ENCODE measurements at regions of chr4 and their contacts with region 1.

Region 1: GRCh38 chr4:148025981-148026380 is 294.1 kb downstream of the ARHGAP10 start:
- DNase-seq: no peak
- ATAC-seq: no peak
- H3K4me3 ChIP-seq: no peak overlapping the region
- H3K4me3 Mint-ChIP-seq: no peak overlapping the region
- H3K27ac ChIP-seq: no peak overlapping the region
- H3K27ac Mint-ChIP-seq: no peak overlapping the region
- H3K4me1 ChIP-seq: no peaks in the 10 kb centered on the region
- H3K4me1 Mint-ChIP-seq: no peaks in the 10 kb centered on the region
- H3K27me3 ChIP-seq: no peaks in the 10 kb centered on the region
- H3K27me3 Mint-ChIP-seq: no peaks in the 10 kb centered on the region
- CTCF ChIP-seq: no peak

Region 2: GRCh38 chr4:148776941-148777340 is 751.0 kb after region 1 on chr4:
- CTCF ChIA-PET with region 1: no interaction called
- POLR2A ChIA-PET with region 1: no interaction called
- intact Hi-C with region 1: loop called in 1 of 2 experiments (anchors 10 kb)
- DNase-seq: no peak
- ATAC-seq: no peak
- H3K4me3 ChIP-seq: no peak overlapping the region
- H3K4me3 Mint-ChIP-seq: no peak overlapping the region
- H3K27ac ChIP-seq: no peak overlapping the region
- H3K27ac Mint-ChIP-seq: no peak overlapping the region
- H3K4me1 ChIP-seq: no peaks in the 10 kb centered on the region
- H3K4me1 Mint-ChIP-seq: no peaks in the 10 kb centered on the region
- H3K27me3 ChIP-seq: no peaks in the 10 kb centered on the region
- H3K27me3 Mint-ChIP-seq: no peaks in the 10 kb centered on the region
- CTCF ChIP-seq: no peak

Region 3: GRCh38 chr4:149031399-149031798 is 1005.4 kb after region 1 on chr4:
- CTCF ChIA-PET with region 1: no interaction called
- POLR2A ChIA-PET with region 1: no interaction called
- intact Hi-C with region 1: loop called (anchors 2 to 10 kb)
- DNase-seq: no peak
- ATAC-seq: no peak
- H3K4me3 ChIP-seq: no peak overlapping the region
- H3K4me3 Mint-ChIP-seq: no peak overlapping the region
- H3K27ac ChIP-seq: no peak overlapping the region
- H3K27ac Mint-ChIP-seq: no peak overlapping the region
- H3K4me1 ChIP-seq: no peaks in the 10 kb centered on the region
- H3K4me1 Mint-ChIP-seq: no peaks in the 10 kb centered on the region
- H3K27me3 ChIP-seq: peaks cover 0 to under 1% of the 10 kb centered on the region in 2 experiments
- H3K27me3 Mint-ChIP-seq: no peaks in the 10 kb centered on the region
- CTCF ChIP-seq: no peak

Region 4: DNA sequence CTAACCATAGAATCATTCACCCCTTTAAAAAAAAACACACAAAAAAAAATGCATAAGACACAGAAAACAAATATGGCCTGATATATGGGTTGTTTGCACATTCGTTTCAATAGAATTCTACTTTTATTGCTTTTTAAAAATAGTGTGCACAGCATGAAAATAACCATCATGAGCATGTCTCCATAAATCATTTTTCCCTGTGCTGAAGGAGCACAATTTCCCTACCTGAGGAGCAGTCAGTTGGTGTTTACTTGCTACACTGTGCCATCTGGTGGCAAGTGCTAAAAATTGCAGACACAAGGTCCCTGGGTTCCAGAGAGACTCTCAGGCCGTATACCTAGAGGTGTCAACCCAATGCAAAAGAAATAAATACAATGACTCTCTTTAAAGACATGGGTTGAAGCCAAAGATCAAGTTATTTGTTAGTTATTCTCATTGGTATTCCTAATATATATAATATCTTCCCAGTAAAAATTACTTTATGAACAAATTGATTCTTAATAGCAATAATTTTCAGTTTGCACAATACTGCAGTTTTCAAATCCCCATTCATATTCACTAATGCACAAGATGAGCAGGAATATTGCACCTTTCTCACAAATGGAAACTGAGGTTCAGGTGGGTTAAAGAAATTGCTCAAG is 1238.2 kb after region 1 on chr4:
- CTCF ChIA-PET with region 1: no interaction called
- POLR2A ChIA-PET with region 1: no interaction called
- intact Hi-C with region 1: loop called in 1 of 2 experiments (anchors 5 kb)
- DNase-seq: peak in 4 of 14 experiments; percentile 2 to 37 (median 24)
- ATAC-seq: no peak
- H3K4me3 ChIP-seq: no peak overlapping the region
- H3K4me3 Mint-ChIP-seq: no peak overlapping the region
- H3K27ac ChIP-seq: no peak overlapping the region
- H3K27ac Mint-ChIP-seq: no peak overlapping the region
- H3K4me1 ChIP-seq: no peaks in the 10 kb centered on the region
- H3K4me1 Mint-ChIP-seq: no peaks in the 10 kb centered on the region
- H3K27me3 ChIP-seq: no peaks in the 10 kb centered on the region
- H3K27me3 Mint-ChIP-seq: no peaks in the 10 kb centered on the region
- CTCF ChIP-seq: peak; percentile 41

Region 5: GRCh38 chr4:149785696-149786431 is 1759.9 kb after region 1 on chr4:
- CTCF ChIA-PET with region 1: no interaction called
- POLR2A ChIA-PET with region 1: no interaction called
- intact Hi-C with region 1: no loop called
- DNase-seq: no peak
- ATAC-seq: no peak
- H3K4me3 ChIP-seq: no peak overlapping the region
- H3K4me3 Mint-ChIP-seq: no peak overlapping the region
- H3K27ac ChIP-seq: no peak overlapping the region
- H3K27ac Mint-ChIP-seq: no peak overlapping the region
- H3K4me1 ChIP-seq: no peaks in the 10 kb centered on the region
- H3K4me1 Mint-ChIP-seq: no peaks in the 10 kb centered on the region
- H3K27me3 ChIP-seq: no peaks in the 10 kb centered on the region
- H3K27me3 Mint-ChIP-seq: no peaks in the 10 kb centered on the region
- CTCF ChIP-seq: no peak

Measured in CD4-positive, alpha-beta T cell (primary cell).